Activated CD4-positive, alpha-beta T cell treated with anti-CD3 and anti-CD28 coated beads, Interleukin-2, amount 10 ng/mL, durations not matched to agents 7 days and 5 days (primary cell): ENCODE measurements at regions of chr2 and their contacts with region 1.

Region 1: DNA sequence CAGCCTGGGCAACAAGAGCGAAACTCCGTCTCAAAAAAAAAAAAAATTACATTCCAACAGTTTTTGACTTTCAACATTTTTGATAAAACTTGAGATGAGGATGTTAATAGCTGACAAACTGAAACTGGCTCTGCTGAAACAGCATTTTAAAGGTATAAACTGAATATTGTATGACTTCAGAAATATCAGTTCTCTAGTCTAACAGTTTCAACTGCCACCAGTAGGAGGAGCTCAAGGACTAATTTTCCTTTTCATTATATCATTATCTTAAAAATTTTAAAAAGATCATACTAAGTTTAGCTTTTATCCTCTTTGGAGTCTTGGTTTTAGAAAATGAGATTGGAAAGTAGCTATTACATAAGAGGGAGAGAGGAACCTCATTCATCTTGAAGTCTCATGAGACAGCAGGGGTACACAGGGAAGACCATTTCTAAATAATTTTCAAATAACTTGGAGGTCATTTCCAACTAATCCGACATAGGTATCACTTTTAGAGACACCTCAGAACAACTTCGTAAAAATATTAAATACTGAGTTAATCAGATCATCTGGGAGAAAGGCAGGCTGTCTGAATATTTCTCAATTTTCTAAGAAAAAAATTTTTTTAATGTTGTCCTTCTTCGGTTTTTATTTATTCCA is 37.6 kb upstream of the MCM6 start:
- DNase-seq: peak; percentile 72
- H3K4me3 Mint-ChIP-seq: no peak overlapping the region
- H3K27ac Mint-ChIP-seq: no peak overlapping the region
- H3K4me1 Mint-ChIP-seq: peaks cover 14% of the 10 kb centered on the region
- H3K27me3 Mint-ChIP-seq: no peaks in the 10 kb centered on the region

Region 2: DNA sequence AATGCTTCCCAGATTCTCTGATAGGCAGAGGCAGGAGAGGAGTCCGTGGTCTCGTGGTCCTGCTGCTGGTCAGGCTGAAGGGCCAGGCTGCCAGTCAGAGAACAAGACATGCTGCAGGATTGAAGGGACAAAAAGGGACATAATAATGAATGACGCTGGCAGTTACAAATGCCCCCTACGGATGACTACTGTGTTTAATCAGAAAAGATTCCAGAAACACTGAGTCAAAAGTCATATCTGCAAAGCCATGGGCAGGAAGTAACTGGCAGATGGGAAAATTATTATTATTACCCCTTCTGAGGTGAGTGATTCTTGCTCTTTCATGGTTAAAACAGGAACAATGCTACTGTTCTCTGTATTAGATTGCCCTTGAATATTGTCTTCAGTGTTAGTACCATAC is 95.9 kb before region 1 on chr2:
- CTCF ChIA-PET with region 1: no interaction called
- POLR2A ChIA-PET with region 1: no interaction called
- DNase-seq: no peak
- H3K4me3 Mint-ChIP-seq: no peak overlapping the region
- H3K27ac Mint-ChIP-seq: no peak overlapping the region
- H3K4me1 Mint-ChIP-seq: peaks cover 36% of the 10 kb centered on the region
- H3K27me3 Mint-ChIP-seq: no peaks in the 10 kb centered on the region

Region 3: GRCh38 chr2:135948642-135949355 is 35.0 kb after region 1 on chr2:
- CTCF ChIA-PET with region 1: no interaction called
- POLR2A ChIA-PET with region 1: interaction called, 13 read pairs
- DNase-seq: no peak
- H3K4me3 Mint-ChIP-seq: peak overlapping the region; percentile 32
- H3K27ac Mint-ChIP-seq: peak overlapping the region; percentile 73
- H3K4me1 Mint-ChIP-seq: peaks cover 37% of the 10 kb centered on the region
- H3K27me3 Mint-ChIP-seq: no peaks in the 10 kb centered on the region

Region 4: DNA sequence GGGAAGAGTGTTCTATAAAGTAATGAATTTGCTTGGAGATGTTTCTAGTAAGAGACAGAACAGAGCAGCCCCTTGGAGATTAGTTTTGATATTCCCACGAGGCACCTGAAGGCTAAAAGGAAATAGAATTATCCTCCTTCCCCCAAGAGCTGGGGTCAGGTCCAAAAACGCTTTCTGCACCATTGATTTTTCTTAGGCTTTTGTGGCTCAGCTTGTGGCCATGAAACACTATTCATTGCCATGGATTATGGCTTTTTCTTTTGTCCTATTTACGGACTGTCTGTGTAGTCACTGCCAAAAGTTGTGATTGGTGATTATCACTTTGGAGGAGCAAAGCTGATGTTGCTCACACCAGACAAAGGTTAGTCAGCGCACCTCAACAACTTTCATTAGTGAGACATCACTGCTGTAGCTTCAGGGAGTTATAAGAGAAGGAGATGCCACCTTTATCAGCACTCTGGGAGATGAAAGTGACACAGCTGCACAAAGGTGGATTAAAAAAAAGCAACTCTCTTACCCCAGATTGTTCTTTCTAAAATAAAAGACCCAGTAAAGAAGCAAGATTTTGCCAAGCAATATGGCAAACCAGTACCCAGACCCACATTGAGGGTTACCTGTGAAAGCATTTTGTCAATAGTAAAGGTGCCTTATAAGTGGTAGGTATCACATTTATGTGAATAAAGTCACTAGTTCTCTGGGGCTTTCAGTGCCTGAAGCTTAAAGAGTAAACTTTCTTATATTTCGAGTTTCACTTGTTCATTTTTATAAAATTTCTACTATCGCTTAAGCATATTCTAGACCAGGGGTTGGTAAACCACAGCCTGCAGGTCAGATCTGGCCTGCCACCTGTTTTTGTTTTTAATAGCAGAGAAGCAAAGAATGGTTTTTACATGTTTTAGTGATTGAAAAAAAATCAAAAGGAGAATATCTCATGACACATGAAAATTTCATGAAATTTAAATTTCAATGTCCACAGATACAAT is 193.5 kb after region 1 on chr2:
- CTCF ChIA-PET with region 1: no interaction called
- POLR2A ChIA-PET with region 1: no interaction called
- DNase-seq: no peak
- H3K4me3 Mint-ChIP-seq: no peak overlapping the region
- H3K27ac Mint-ChIP-seq: no peak overlapping the region
- H3K4me1 Mint-ChIP-seq: peaks cover 10% of the 10 kb centered on the region
- H3K27me3 Mint-ChIP-seq: no peaks in the 10 kb centered on the region

Region 5: DNA sequence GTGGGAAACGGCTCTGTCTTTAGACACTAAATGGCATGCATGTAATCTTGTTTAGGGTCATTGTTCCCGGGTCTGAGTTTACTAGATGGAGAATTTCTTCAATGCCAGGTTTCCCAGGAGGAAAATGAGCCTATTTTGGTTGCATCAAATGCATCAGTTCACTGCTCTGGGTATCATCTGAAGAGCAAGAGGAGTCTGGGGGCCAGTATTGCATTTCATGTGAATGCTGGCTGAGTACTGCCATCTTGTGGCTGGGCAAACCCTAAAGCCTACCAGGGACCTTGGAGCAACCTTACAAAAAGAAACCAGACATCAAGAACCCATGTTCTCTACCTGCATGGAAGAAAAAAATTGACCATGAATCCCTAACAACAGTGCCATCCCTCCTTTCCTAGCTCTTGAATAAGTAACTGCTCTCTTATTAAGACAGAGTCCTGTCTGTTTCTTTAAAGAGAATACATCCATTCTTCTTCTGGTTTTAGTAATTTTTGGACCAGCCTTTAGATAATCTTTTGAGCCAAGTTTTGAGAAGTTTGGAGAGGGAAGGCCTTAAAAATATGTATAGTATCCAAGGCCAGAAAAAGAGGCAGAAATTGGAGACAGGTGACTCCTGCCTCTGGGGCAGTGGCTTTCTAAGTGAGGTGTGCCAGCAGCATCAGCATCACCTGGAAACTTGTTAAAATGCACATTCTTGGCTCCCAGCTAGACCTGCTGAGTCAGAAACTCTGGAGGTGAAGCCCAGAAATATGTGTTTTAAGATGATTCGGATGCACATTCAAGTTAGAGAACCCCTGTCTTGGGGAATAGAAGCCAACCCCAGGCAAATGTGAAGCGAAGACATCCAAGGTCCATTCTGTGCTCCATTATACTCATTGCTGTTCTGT is 465.1 kb after region 1 on chr2:
- CTCF ChIA-PET with region 1: interaction called, 50 read pairs
- POLR2A ChIA-PET with region 1: interaction called, 6 read pairs
- DNase-seq: peak; percentile 83
- H3K4me3 Mint-ChIP-seq: no peak overlapping the region
- H3K27ac Mint-ChIP-seq: peak overlapping the region; percentile 3
- H3K4me1 Mint-ChIP-seq: peaks cover 81% of the 10 kb centered on the region
- H3K27me3 Mint-ChIP-seq: no peaks in the 10 kb centered on the region

Region 6: DNA sequence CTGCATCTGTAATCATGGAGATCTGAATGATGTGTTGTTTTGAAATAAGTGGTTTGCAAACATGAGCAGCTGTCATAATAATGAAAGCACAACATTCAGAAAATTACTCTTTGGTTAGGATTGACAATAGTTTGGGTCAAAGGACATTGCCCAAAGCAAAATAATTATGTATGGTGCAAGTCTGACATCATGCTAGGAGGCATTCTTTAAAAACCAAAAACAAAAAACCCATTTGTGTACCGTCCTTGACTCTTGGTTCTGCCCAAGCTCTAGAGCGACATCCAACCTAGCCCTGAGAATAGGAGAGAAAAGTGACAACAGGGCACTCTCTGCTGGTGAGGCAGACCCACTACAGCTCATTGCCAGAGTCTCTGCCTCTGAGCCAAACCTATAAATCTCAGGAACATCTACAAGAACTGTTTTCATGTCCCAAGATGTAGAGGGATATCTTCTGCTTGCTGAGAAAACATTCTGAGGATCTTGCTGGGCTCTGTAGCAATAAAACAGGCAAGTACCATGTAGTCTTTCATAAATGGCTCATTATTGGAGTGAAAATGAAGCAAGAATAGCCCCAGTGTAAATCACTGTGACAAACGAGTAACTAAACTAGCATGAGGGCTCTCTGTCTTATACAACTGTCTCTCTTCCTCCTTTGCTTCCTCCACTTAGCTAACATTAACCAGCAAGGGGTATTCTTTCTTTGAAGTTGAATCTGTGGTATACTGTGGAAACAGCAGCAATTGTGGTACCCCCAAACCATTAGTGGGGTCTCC is 470.9 kb after region 1 on chr2:
- CTCF ChIA-PET with region 1: interaction called, 50 read pairs
- POLR2A ChIA-PET with region 1: interaction called, 6 read pairs
- DNase-seq: peak; percentile 64
- H3K4me3 Mint-ChIP-seq: no peak overlapping the region
- H3K27ac Mint-ChIP-seq: peak overlapping the region; percentile 46
- H3K4me1 Mint-ChIP-seq: peaks cover 44% of the 10 kb centered on the region
- H3K27me3 Mint-ChIP-seq: no peaks in the 10 kb centered on the region